ENCODE measurements at regions of chr3 and their contacts with region 1.

Region 1: GRCh38 chr3:50542177-50543034 is 25.1 kb downstream of the C3orf18 start:
- DNase-seq: peak; percentile 87
- ATAC-seq: peak; percentile 67
- H3K4me3 Mint-ChIP-seq: no peak overlapping the region
- H3K27ac Mint-ChIP-seq: no peak overlapping the region
- H3K4me1 Mint-ChIP-seq: peaks cover 22% of the 10 kb centered on the region
- H3K27me3 Mint-ChIP-seq: no peaks in the 10 kb centered on the region; the same call in 1 of the 2 replicates
- CTCF ChIP-seq: peak; percentile 88

Region 2: DNA sequence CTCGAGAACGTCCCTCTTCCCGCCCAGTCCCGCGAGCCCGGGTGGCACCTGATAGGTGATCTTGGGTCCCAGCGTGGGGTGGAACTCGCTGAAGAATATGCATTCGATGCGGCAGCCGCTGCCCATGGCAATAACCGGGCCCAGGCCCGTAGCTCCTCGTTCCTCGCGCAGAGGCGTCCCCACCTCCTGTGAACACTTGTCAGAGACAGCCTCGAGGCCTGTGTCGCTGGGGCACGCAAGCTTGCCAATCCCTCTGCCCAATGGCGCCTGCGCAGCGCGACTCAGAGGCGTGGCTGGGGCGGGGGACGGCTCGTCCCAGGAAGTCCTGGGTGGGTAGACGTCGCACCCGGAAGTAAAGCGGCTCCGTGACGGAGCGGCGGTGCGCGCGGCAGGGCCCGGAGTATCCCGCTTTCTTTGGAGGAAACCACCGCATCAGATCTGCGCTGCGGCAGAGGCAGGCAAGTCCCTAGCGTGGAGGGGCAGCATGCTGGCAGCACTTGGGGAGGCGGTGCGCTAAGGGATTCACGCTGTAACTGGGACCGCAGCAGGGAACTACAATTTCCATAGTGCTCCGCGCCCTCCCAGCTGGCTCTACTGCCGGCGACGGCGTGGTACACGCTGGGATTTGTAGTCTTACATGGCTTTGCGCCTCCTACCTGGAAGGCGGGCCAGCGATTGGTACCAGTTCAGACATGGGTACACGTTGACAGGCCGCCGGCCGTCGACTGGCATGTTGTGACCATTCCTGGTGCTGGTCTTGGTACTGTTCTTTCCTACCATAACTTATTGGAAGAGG is 191.7 kb before region 1 on chr3 and contains the starts of genes CYB561D2 and NPRL2:
- CTCF ChIA-PET with region 1: interaction called, 18 read pairs
- POLR2A ChIA-PET with region 1: no interaction called
- DNase-seq: peak; percentile 90
- ATAC-seq: peak; percentile 87
- H3K4me3 Mint-ChIP-seq: peak within 1 kb of the TSS; percentile 95
- H3K27ac Mint-ChIP-seq: peak within 1 kb of the TSS; percentile 93
- H3K4me1 Mint-ChIP-seq: peaks cover 18% of the 10 kb centered on the region
- H3K27me3 Mint-ChIP-seq: peaks cover 10% of the 10 kb centered on the region
- CTCF ChIP-seq: no peak
- total RNA-seq, gene CYB561D2: 9.8 to 12.0 TPM (median 11.3 TPM) in 3 replicates
- total RNA-seq, gene NPRL2: 20.6 to 26.6 TPM (median 23.9 TPM) in 3 replicates

Region 3: DNA sequence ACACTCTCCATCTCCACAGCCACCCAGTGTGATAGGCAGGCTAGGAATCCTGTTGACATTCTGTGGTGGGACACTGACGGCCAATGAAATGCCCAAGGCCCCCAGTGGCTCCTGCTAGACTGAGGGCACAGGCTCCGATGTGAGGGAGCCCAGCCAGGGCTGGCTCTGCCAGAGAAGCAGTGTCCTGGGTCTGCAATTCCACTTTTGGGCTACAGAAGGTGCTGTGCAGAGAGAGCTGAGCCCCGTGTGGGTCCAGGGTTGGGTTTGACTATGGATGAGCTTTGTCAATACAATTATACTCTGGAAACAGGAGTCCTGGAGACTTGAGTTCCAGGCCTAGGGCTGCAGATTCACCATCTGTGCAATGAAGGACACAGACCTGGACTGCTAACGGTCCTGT is 127.3 kb before region 1 on chr3:
- CTCF ChIA-PET with region 1: interaction called, 11 read pairs
- POLR2A ChIA-PET with region 1: no interaction called
- DNase-seq: peak; percentile 53
- ATAC-seq: peak; percentile 83
- H3K4me3 Mint-ChIP-seq: no peak overlapping the region
- H3K27ac Mint-ChIP-seq: no peak overlapping the region
- H3K4me1 Mint-ChIP-seq: peaks cover 14% of the 10 kb centered on the region
- H3K27me3 Mint-ChIP-seq: no peaks in the 10 kb centered on the region
- CTCF ChIP-seq: peak; percentile 43

Region 4: GRCh38 chr3:50436114-50436674 is 106.2 kb before region 1 on chr3:
- CTCF ChIA-PET with region 1: interaction called, 46 read pairs
- POLR2A ChIA-PET with region 1: no interaction called
- DNase-seq: peak; percentile 89
- ATAC-seq: peak; percentile 92
- H3K4me3 Mint-ChIP-seq: no peak overlapping the region
- H3K27ac Mint-ChIP-seq: no peak overlapping the region
- H3K4me1 Mint-ChIP-seq: no peaks in the 10 kb centered on the region; the same call in 1 of the 2 replicates
- H3K27me3 Mint-ChIP-seq: no peaks in the 10 kb centered on the region
- CTCF ChIP-seq: peak; percentile 91

Region 5: GRCh38 chr3:50503504-50504342 is 38.7 kb before region 1 on chr3 and contains the start of gene CACNA2D2:
- CTCF ChIA-PET with region 1: interaction called, 21 read pairs
- POLR2A ChIA-PET with region 1: no interaction called
- DNase-seq: peak; percentile 79
- ATAC-seq: peak; percentile 80
- H3K4me3 Mint-ChIP-seq: peak within 1 kb of the TSS; percentile 73
- H3K27ac Mint-ChIP-seq: no peak within 1 kb of the TSS
- H3K4me1 Mint-ChIP-seq: peaks cover 15% of the 10 kb centered on the region
- H3K27me3 Mint-ChIP-seq: peaks cover 39% of the 10 kb centered on the region
- CTCF ChIP-seq: no peak
- total RNA-seq, gene CACNA2D2: 22.0 to 23.4 TPM (median 22.3 TPM) in 3 replicates

Region 6: DNA sequence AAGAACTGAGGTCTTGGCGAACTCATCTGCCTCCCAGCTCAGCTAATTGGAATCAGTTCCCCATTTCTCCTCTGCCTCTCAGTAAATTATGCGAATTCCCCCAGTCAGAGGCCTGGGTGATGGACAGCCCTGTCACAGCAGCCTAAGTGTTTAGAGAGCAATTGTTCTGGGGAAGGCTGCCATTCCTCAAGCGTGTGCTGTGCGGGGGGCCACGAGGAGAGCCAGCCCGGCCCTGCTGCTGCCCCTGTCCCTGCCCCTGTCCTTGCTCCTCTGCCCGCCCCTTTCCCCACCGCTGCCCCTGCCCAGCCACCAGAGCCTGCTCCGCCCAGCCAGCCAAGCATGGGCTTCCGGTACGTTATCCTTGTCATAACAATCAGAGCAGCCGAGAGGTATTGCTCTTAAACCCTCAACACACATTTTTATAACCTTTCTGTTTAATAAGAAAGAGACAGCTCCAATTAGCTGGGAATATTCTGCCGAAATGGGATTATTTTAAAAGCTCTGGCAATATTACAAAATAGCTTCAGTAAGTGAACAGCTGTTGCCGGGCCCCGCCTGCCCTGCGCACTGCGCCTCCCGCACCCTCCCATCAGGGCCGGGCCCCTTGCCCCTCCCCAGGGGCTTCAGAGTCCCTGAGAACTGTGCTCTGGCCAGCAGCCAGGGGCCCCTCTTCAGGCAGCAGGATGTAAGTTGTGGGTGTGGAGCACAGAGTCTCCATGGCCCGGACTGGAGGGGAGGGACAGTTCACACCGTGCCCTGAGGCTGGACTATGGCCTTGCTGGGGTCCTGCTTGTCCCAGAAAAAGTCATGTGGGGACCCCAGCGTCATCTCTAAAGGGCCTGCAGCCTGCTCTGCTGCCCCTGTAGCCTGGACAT is 26.6 kb before region 1 on chr3:
- CTCF ChIA-PET with region 1: interaction called, 42 read pairs
- POLR2A ChIA-PET with region 1: no interaction called
- DNase-seq: peak; percentile 70
- ATAC-seq: peak; percentile 69
- H3K4me3 Mint-ChIP-seq: peak overlapping the region; percentile 33
- H3K27ac Mint-ChIP-seq: 0 out of 2 replicates have a peak overlapping the region, but pooled peaks have one; percentile 15
- H3K4me1 Mint-ChIP-seq: peaks cover 57% of the 10 kb centered on the region
- H3K27me3 Mint-ChIP-seq: peaks cover 5% of the 10 kb centered on the region
- CTCF ChIP-seq: no peak

Region 7: GRCh38 chr3:50525987-50526386 is 16.4 kb before region 1 on chr3:
- CTCF ChIA-PET with region 1: interaction called, 24 read pairs
- POLR2A ChIA-PET with region 1: interaction called, 4 read pairs
- DNase-seq: peak; percentile 86
- ATAC-seq: peak; percentile 77
- H3K4me3 Mint-ChIP-seq: no peak overlapping the region
- H3K27ac Mint-ChIP-seq: no peak overlapping the region
- H3K4me1 Mint-ChIP-seq: peaks cover 44% of the 10 kb centered on the region
- H3K27me3 Mint-ChIP-seq: peaks cover 20% of the 10 kb centered on the region
- CTCF ChIP-seq: no peak

Region 8: DNA sequence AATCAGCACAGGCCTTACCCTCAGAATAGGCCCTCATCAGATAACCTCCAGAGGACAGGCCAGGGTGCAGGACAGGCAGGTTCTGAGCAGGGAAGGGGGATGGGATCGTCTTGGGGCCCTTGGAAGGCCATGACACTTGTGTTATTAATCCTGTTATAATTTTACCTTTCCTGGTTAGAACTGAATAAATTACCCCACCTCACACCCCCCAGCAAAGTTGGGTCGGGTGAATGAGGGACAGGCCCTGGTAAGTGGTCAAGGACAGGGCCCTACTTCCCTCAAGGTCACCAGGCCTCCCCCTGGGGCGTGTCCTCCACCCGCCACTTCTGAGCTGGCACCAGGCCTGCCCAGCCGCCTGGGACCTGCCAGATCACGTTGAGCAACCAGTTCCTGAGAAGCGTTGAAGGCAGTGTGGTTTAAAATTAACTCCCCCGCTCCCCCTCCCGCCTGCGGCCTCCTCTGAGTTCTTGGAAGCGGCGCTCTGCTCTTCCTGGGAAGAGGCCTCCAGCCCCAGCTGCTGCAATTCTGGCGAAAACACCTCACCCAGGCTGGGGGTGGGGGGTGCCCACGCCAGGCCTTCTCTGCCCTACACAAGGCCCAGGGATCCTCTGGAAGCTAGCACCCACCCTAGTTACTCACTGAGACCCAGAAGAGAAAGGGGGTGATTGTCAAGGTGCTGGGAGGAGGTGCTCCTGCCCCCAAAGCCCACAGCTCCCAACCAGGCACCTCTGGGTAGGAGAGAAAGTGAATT is 58.6 kb after region 1 on chr3:
- CTCF ChIA-PET with region 1: no interaction called
- POLR2A ChIA-PET with region 1: no interaction called
- DNase-seq: no peak
- ATAC-seq: peak; percentile 33
- H3K4me3 Mint-ChIP-seq: no peak overlapping the region
- H3K27ac Mint-ChIP-seq: no peak overlapping the region; the same call in 1 of the 2 replicates
- H3K4me1 Mint-ChIP-seq: no peaks in the 10 kb centered on the region
- H3K27me3 Mint-ChIP-seq: peaks cover 3% of the 10 kb centered on the region
- CTCF ChIP-seq: no peak

Region 9: DNA sequence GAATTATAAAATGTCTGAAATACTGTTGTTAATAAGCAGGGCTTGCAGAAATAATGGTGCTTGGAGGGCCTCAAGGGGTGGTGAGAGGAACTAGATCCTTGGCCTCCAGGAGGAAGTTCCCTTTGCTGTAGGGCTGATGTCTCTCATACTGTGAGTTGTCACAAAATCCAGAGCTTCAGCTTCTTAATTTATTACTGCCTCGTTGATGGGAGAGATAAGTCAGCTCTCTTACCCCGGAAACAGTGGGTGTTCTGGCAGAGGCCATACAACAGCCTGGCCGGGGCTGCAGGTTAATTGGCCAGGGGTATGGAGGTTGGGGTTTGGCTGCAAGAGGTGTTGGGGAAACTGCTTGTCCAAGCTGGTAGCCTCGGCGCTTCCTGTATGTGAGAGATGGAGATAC is 90.0 kb after region 1 on chr3:
- CTCF ChIA-PET with region 1: no interaction called
- POLR2A ChIA-PET with region 1: no interaction called
- DNase-seq: no peak
- ATAC-seq: no peak
- H3K4me3 Mint-ChIP-seq: no peak overlapping the region
- H3K27ac Mint-ChIP-seq: no peak overlapping the region
- H3K4me1 Mint-ChIP-seq: peaks cover 26% of the 10 kb centered on the region
- H3K27me3 Mint-ChIP-seq: no peaks in the 10 kb centered on the region
- CTCF ChIP-seq: no peak

Region 10: GRCh38 chr3:50648313-50648712 is 105.9 kb after region 1 on chr3:
- CTCF ChIA-PET with region 1: no interaction called
- POLR2A ChIA-PET with region 1: no interaction called
- DNase-seq: peak; percentile 55
- ATAC-seq: peak; percentile 21
- H3K4me3 Mint-ChIP-seq: no peak overlapping the region
- H3K27ac Mint-ChIP-seq: 0 out of 2 replicates have a peak overlapping the region, but pooled peaks have one; percentile 23
- H3K4me1 Mint-ChIP-seq: peaks cover 26% of the 10 kb centered on the region
- H3K27me3 Mint-ChIP-seq: no peaks in the 10 kb centered on the region
- CTCF ChIP-seq: no peak